Tibial artery (tissue), 4 donors: ENCODE measurements at regions of chr22 and their contacts with region 1.

Region 1: GRCh38 chr22:17084554-17085276 is at the start of gene IL17RA:
- DNase-seq: peak; percentile 88 to 94
- H3K4me3 ChIP-seq: peak within 1 kb of the TSS; percentile 71 to 84
- H3K27ac ChIP-seq: peak within 1 kb of the TSS; percentile 75 to 89
- H3K4me1 ChIP-seq: peaks cover 0 to 26% (median 11%) of the 10 kb centered on the region in 4 donors
- H3K27me3 ChIP-seq: no peaks in the 10 kb centered on the region
- CTCF ChIP-seq: no peak

Region 2: DNA sequence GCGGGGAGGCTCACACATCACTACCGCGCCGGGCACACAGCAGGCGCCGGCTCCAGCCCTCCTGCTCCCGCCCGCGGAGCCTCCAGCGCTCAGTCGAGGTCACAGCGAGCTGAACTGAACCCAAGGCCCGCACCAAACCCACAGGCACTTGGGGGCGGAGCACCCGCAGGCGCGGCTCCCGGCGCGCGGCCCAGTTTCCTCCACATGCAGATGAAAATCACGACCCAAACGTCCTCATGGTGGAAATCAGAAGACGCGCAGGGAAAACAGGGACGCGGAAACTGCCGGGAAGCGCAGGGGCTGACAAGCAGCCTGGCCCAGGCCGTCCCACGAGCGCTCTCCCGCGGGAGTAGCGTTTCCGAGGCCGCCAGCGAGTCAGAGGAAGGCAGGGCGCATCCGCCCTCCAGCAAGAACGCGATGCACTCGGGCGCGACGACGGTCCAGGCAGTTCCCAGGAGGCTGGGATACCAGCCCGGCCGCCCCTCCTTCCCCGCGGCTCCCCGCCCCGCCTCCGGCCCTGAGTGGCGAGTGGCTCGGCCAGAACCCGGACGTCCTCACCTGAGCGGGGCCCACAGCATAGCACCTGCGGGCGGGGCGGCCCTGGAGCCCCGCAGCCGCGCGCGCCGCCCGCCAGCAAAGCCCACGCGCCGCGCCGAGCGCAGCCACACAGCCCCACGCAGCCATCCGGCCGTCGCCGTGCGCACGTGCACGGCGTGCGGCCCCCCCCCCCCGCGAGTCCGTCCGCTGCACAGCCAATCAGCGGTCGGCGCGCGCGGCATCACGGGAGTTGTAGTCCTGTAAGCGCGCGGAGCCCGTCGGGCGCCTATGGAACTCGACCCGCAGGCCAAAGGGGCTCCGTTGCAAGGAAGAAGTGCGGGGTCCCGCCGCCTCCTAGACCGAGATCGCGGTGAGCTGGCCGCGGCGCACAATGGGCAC is 74.1 kb after region 1 on chr22 and contains the start of gene HDHD5:
- intact Hi-C with region 1: loop called (anchors 5 kb)
- DNase-seq: peak; percentile 91 to 93
- H3K4me3 ChIP-seq: peak within 1 kb of the TSS; percentile 65 to 86
- H3K27ac ChIP-seq: peak within 1 kb of the TSS; percentile 90 to 93
- H3K4me1 ChIP-seq: peaks cover 0 to 38% (median 19%) of the 10 kb centered on the region in 4 donors
- H3K27me3 ChIP-seq: no peaks in the 10 kb centered on the region
- CTCF ChIP-seq: no peak

Region 3: DNA sequence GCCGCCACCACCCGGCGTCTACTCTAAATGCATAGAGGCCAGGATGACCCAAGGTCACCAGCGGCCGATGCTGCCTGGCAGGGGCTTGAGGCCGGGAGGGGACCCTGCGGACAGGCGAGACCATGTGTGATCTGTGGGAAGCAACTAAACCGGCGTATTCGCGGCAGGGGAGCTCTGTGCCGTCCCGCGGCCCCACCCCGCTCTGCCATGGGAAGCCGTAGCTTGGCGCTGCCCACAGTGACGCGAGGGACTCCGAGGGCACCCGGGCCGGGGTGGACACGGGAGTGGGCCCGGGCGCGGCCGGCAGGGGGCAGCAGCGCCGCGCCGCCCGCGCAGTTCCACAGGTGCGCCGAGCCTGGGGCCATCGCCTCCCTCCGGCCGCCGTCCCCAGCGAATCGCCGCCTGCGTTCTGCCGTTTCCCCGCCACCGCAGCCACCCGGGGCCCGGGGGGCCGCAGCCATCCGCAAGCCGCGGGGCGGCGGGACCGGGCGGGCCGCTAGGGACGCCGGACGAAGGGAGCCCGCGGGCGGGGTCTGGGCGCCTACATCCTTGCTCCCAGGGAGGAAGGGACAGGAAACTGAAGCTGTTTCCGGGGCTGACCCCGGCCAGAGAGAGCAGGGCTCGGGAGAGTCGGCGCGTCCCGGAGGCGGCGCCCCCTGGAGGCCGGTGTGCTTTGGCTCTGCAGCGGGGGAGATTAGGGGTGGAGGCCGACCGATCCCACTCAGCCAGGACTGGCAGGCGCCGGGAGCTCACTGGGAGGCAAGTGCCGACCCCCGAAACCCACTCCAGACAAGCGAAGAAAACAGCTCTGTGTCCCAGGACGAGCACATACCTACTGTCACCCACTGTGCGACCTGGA is 86.8 kb after region 1 on chr22:
- intact Hi-C with region 1: loop called (anchors 5 kb)
- DNase-seq: peak; percentile 83 to 93
- H3K4me3 ChIP-seq: peak overlapping the region; percentile 61 to 91
- H3K27ac ChIP-seq: peak overlapping the region; percentile 89 to 93
- H3K4me1 ChIP-seq: peaks cover 0 to 24% (median 19%) of the 10 kb centered on the region in 4 donors
- H3K27me3 ChIP-seq: no peaks in the 10 kb centered on the region
- CTCF ChIP-seq: peak; percentile 66 to 92

Region 4: DNA sequence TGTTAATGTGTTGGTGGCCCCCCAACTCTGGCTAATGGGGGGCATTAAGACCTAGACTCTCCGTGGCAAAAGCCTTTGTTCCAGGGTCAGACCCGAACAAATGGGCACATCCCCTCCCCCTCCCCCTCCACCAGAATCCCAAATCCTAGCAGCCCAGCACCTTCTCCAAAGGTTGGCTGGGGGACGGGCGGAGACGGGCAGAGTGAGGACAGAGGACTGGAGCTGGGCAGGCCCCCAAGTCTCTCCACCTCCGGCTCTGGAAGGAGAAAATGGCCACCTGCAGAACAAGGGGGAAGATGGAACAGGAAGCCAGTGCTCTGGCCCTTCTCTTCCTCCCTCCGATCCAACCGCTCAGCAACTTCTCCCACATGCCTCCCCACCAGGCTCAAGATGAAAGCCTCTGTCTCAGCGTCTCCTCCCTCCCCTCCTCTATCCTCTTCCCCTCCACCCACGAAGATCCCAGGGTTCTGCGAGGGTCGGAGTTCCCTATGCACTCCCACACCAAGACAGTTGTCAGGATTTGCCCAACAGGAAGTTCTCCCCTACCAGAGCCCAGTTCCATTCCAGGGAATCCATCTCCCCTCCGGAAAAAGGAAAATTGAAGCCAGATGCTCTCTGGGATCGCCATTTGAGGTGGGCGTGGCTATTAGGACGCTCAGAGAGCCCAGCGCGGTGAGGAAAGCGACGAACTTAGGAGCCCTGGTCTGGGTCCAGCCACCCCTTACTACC is 114.5 kb after region 1 on chr22:
- intact Hi-C with region 1: no loop called
- DNase-seq: no peak
- H3K4me3 ChIP-seq: peak overlapping the region; percentile 19 to 27
- H3K27ac ChIP-seq: no peak overlapping the region
- H3K4me1 ChIP-seq: peaks cover 0 to 5% (median 0%) of the 10 kb centered on the region in 4 donors
- H3K27me3 ChIP-seq: peaks cover 0 to 30% of the 10 kb centered on the region in 2 donors
- CTCF ChIP-seq: no peak